ENCODE measurements at regions of chr5 and their contacts with region 1.

Region 1: DNA sequence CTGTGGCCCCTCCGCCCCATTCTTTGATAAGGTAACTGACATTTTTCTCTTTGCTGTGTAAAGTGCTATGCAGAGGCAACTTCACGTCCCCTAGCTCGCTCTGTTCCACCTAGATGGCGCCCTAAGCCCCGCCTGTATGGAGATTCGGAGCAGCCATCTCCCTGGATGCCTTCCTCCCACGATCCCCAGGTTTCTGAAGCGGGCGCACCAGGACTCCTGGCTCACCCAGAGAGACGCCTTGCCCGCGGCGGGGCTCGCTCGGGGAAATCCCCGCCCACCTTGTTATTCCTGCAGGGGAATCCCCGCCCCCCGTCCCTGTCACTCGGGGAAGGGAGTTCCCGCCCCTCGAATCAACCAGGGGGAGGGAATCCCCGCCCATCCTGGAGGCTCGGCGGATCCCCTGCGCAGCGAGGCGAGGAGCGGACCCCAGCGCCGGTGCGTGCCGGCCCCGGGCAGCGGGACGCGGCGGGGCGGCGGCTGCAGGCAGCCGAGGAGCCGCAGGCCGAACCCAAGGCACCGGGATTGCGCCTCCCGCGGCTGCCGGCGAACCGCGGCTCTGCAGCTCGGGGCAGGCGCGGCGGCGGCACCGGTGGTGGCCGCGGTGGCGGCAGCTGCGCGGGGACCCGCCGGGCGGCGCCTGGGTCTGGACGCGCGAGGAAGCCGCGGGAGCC is at the start of gene PDZD2:
- H3K4me3 ChIP-seq: peak within 1 kb of the TSS; percentile 54
- H3K27ac ChIP-seq: peak within 1 kb of the TSS; percentile 50; the same call in 1 of the 2 replicates
- H3K4me1 ChIP-seq: peaks cover 9% of the 10 kb centered on the region
- CTCF ChIP-seq: peak; percentile 89

Region 2: GRCh38 chr5:31656806-31657205 is 17.9 kb after region 1 on chr5:
- CTCF ChIA-PET with region 1: interaction called, 13 read pairs
- POLR2A ChIA-PET with region 1: no interaction called
- H3K4me3 ChIP-seq: no peak overlapping the region
- H3K27ac ChIP-seq: no peak overlapping the region
- H3K4me1 ChIP-seq: peaks cover 11% of the 10 kb centered on the region
- CTCF ChIP-seq: no peak

Measured in HEK293 (cell line).